ENCODE measurements at regions of chr2 and their contacts with region 1.

Region 1: DNA sequence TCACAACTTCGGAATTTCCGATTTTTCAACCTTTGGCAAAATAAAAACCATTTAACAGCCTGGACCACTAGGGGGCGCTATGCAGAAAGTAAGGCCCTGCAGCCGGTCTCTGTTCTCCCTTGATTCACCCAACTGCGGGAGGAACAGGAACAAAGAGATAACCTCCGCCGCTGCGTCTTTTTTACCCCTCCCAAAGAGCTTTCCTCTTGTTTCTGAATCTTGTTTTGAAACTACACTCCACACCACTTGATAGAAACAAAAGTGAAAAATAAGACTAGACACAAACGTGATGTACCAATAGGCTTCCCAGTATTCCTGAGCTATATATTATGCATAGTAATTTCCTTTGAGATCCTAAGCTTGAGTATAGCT is 231.2 kb downstream of the MYO3B start:
- DNase-seq: peak; percentile 86
- ATAC-seq: peak; percentile 75
- H3K4me3 Mint-ChIP-seq: peak overlapping the region; percentile 37
- H3K27ac Mint-ChIP-seq: no peak overlapping the region
- H3K4me1 Mint-ChIP-seq: peaks cover 6% of the 10 kb centered on the region
- H3K27me3 Mint-ChIP-seq: peaks cover 38% of the 10 kb centered on the region

Region 2: GRCh38 chr2:170313347-170313991 is 95.7 kb before region 1 on chr2:
- CTCF ChIA-PET with region 1: no interaction called
- POLR2A ChIA-PET with region 1: no interaction called
- DNase-seq: no peak
- ATAC-seq: no peak
- H3K4me3 Mint-ChIP-seq: no peak overlapping the region
- H3K27ac Mint-ChIP-seq: no peak overlapping the region
- H3K4me1 Mint-ChIP-seq: no peaks in the 10 kb centered on the region
- H3K27me3 Mint-ChIP-seq: peaks cover 28% of the 10 kb centered on the region

Region 3: DNA sequence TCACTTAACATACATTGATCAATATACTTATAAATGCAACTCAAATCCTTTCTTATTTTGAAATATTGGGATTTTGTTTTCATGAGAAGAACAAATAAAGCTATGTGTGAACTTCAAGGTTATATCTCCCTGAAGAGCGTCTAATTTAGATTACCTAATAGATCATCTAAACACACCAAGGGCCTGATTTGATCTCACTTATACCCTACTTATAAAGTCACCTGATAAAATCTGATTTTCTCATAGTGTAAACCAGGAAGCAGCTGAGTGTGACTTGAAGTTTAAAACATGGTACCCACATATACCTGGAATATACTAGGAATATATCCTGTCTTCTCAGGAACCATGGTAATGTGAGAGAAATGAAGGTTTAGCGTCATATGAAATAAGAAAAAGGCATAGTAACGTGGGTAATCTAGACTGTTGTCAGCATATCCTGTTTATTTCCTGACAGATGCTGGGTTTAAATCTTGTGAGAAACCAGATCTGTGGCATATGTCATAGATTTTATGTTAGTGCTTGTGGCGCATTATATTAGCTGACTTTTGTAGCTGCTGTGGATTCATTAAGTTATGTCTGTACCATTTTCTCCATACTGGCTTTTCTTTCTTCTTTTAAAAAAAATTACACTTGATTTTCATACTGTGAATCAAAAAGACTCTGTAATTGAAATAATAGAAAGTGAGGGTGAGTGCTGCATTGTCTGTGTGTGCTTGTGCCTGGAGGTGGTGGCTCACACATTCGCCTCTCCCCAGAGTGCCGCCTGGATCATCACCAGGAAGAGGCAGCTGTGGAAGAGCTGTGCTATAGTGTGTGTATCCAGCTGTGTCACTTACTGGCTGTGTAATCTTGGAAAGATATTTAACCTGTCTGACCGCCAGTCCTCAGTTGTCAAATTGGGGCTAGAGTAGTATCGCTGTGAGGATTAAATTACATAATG is 67.2 kb before region 1 on chr2:
- CTCF ChIA-PET with region 1: no interaction called
- POLR2A ChIA-PET with region 1: no interaction called
- DNase-seq: no peak
- ATAC-seq: no peak
- H3K4me3 Mint-ChIP-seq: no peak overlapping the region
- H3K27ac Mint-ChIP-seq: peak overlapping the region; percentile 57
- H3K4me1 Mint-ChIP-seq: peaks cover 34% of the 10 kb centered on the region
- H3K27me3 Mint-ChIP-seq: peaks cover 2% of the 10 kb centered on the region

Region 4: DNA sequence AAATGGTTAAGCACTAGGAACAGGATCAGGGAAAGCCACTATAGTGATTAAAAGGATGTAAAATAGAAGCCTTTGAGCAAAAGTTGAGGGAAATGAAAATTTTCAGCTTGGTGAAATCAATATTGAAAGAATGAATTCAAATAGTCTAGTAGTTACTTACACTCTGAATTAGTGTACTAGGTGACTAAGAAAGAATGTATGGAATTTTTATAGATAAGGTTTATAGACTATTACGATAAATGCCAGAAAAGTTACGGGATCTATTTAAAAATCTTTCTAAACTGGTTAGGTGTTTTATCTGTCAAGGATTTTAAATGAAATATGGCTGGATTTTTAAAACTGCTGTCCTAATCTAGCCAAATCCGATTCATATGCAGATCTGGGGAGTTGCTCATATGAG is 22.6 kb before region 1 on chr2:
- CTCF ChIA-PET with region 1: interaction called, 16 read pairs
- POLR2A ChIA-PET with region 1: interaction called, 3 read pairs
- DNase-seq: no peak
- ATAC-seq: no peak
- H3K4me3 Mint-ChIP-seq: no peak overlapping the region
- H3K27ac Mint-ChIP-seq: no peak overlapping the region
- H3K4me1 Mint-ChIP-seq: peaks cover 13% of the 10 kb centered on the region
- H3K27me3 Mint-ChIP-seq: peaks cover 35% of the 10 kb centered on the region

Region 5: DNA sequence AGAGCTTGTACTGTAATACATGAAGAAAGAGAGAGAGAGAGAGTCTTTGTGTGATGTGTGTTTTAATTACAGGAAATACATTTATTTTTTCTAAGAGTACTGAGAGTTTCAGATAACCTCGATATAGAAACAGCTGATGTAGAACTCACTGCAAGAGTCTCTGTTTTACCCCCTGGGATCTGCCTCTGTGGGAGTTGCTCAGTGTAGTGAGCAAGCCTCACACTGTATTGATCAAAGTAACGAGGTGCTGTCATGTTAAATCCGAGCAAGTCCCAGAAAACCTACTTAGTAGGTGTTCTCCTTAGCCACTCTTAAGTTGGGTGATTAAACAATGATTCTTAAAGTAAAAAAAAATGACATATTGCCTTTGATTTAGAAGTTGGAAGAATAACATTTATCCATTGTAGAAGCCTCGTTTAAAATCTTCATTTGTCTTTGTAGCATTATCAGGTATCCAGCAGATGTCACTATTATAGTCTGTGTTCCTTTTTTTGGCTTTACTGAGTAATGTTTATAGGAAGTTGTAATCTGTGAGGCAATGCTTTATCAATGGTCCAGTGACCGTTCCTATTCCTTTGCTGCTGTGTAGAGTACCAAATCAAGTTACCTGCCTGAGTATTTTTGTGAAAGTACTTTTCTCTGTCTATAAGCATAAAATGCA is 12.2 kb before region 1 on chr2:
- CTCF ChIA-PET with region 1: interaction called, 30 read pairs
- POLR2A ChIA-PET with region 1: no interaction called
- DNase-seq: no peak
- ATAC-seq: no peak
- H3K4me3 Mint-ChIP-seq: no peak overlapping the region
- H3K27ac Mint-ChIP-seq: no peak overlapping the region
- H3K4me1 Mint-ChIP-seq: peaks cover 8% of the 10 kb centered on the region
- H3K27me3 Mint-ChIP-seq: peaks cover 45% of the 10 kb centered on the region

Region 6: DNA sequence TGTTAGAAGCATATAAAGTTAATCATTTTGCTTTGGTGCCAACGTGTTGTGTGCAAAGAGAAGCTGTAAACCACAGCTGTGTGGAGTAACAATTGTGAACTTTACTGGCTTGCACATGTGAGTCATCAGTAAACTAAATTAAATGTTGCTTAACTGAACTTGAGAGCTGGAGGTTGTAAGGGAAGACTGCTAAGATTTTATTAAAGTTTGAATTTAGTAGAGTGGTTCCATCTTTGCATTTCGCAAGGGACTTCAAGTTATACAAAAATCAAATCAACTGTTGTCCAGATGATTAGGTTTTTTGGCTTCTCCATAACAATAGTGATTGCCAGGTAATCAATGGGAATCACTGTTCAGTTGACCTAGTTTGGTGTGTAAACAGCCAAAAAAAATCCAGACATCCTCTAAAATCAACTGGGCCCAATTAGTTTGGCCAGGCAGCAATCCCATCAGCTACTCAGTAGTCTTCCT is 16.2 kb after region 1 on chr2:
- CTCF ChIA-PET with region 1: interaction called, 21 read pairs
- POLR2A ChIA-PET with region 1: no interaction called
- DNase-seq: no peak
- ATAC-seq: no peak
- H3K4me3 Mint-ChIP-seq: no peak overlapping the region
- H3K27ac Mint-ChIP-seq: no peak overlapping the region
- H3K4me1 Mint-ChIP-seq: no peaks in the 10 kb centered on the region
- H3K27me3 Mint-ChIP-seq: peaks cover 22% of the 10 kb centered on the region

Region 7: DNA sequence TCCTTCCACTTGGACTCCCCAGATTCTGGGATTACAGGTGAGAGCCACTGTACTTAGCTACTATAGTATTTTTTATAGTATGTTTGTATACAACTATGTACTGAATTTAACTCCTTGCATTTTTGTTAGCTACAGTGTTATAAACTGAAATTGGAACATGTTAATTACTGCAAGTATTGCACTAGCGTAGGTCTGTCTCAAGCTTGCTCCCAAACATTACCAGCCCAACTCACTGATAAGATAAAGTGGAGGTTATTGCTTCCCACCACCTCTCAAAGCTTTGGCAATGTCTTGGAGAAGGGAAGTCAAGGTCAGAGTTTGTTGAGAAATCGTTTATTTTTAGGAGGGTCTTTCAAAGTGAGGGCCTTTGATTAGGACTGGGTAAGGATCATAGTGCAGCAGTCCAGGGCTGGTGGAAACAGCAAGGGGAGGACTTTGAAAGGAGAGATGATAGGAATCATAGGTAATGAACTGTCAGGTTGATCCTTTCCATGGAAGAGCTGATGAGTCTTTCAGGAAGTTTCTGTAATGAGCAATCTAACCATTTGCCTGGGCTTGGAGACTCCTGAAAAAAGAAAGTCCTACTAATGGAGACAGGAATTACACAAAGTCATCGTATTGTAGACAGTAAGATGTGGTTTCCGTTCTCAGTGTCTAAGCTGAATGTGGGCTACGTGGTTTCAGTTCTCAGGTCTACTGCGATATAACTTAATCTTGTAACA is 25.9 kb after region 1 on chr2:
- CTCF ChIA-PET with region 1: interaction called, 21 read pairs
- POLR2A ChIA-PET with region 1: no interaction called
- DNase-seq: peak; percentile 48
- ATAC-seq: peak; percentile 82
- H3K4me3 Mint-ChIP-seq: peak overlapping the region; percentile 42
- H3K27ac Mint-ChIP-seq: no peak overlapping the region
- H3K4me1 Mint-ChIP-seq: peaks cover 23% of the 10 kb centered on the region
- H3K27me3 Mint-ChIP-seq: peaks cover 39% of the 10 kb centered on the region

Region 8: DNA sequence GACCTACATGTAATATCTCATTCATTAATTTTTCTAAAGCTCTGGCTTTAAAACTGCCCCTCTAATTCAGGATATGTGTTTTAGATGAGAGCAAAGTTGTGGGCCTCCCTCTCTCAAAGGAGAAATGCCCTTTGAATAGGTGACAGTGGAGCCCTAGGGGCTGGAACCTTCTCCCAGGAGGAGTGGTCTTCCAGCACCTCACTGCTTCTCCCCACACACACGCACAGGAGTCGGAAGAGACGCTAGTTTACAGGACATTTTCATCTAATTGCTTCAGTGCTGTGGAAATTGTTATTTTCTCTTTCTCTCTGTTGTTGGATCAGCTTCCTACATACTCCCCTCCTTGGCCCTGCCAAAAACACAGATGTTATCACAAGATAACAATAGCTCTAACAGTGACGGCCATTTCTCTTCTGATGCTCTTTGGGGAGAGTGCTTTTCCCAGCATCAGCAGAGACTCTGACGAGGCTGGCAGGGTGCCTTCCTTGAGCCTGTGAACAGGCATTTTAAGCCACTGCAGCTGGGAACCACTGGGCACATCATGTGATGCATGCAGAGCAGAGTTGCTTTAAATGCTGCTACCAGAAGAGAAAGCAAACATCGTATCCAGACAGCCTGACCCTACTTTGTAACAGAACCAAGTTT is 96.6 kb after region 1 on chr2:
- CTCF ChIA-PET with region 1: interaction called, 11 read pairs
- POLR2A ChIA-PET with region 1: no interaction called
- DNase-seq: peak; percentile 29
- ATAC-seq: no peak
- H3K4me3 Mint-ChIP-seq: no peak overlapping the region
- H3K27ac Mint-ChIP-seq: peak overlapping the region; percentile 62
- H3K4me1 Mint-ChIP-seq: peaks cover 56% of the 10 kb centered on the region
- H3K27me3 Mint-ChIP-seq: peaks cover 30% of the 10 kb centered on the region

Region 9: GRCh38 chr2:170815746-170816503 is 406.8 kb after region 1 on chr2:
- CTCF ChIA-PET with region 1: interaction called, 14 read pairs
- POLR2A ChIA-PET with region 1: no interaction called
- DNase-seq: peak; percentile 77
- ATAC-seq: peak; percentile 50
- H3K4me3 Mint-ChIP-seq: peak overlapping the region; percentile 77
- H3K27ac Mint-ChIP-seq: no peak overlapping the region
- H3K4me1 Mint-ChIP-seq: peaks cover 53% of the 10 kb centered on the region
- H3K27me3 Mint-ChIP-seq: peaks cover 85% of the 10 kb centered on the region

Measured in activated CD8-positive, alpha-beta T cell treated with anti-CD3 and anti-CD28 coated beads, Interleukin-2, amount 10 ng/mL, durations not matched to agents 7 days and 5 days (primary cell).